Panc1 (cell line): ENCODE measurements at regions of chr1 and their contacts with region 1.

Region 1: DNA sequence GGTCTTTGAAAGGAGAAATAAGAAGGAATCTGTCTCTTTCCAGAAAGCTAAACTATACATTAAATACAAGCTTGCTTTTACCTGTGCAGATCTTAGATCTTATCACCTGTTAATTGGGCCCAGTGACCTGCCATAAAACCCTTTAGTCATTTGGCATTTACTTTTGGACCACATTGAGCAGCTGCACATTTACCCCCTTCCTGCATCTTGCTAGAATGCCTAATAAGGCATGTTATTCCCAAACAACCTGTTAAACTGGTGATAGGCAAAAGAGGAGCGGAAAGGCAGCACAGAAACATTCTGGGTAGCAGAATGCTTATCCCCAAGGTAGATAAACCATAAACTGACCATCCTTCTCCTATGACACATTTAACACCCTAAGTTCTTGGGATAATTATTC is 40.0 kb upstream of the L1TD1 start:
- DNase-seq: no peak
- ATAC-seq: no peak
- H3K4me3 ChIP-seq: no peak overlapping the region
- H3K27ac ChIP-seq: no peak overlapping the region
- H3K4me1 ChIP-seq: no peaks in the 10 kb centered on the region
- H3K27me3 ChIP-seq: no peaks in the 10 kb centered on the region
- CTCF ChIP-seq: no peak

Region 2: DNA sequence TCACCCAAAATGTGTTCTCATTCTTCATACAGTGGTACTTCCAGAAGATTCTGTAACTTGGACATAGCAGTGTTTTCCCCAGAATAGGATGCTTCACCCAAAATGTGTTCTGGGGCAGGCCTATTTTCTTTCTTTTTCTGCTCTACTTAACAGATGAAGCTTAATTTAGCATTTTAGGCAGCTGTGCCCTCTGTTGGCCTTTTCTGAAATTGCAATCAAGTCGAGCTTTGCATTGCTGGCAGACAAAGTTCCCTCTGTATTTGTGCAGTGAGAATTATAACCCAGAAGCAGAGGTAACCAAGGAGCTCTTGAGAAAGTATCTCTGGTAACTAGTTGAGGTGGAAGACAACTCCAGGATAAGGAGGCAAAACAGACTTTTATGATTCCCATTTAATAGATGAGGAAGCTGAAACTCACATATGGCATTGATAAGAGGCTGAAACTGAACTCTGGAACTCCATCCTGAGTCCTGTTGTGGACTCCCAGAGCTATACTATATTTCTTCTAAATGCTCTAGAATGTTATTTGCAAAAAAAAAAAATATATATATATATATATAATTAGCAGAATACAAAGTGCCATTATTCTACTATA is 10.4 kb before region 1 on chr1:
- CTCF ChIA-PET with region 1: interaction called, 10 read pairs
- POLR2A ChIA-PET with region 1: no interaction called
- in situ Hi-C with region 1: no loop called
- intact Hi-C with region 1: no loop called
- DNase-seq: peak; percentile 51
- ATAC-seq: peak; percentile 78; the same call in 1 of the 2 replicates
- H3K4me3 ChIP-seq: no peak overlapping the region
- H3K27ac ChIP-seq: no peak overlapping the region
- H3K4me1 ChIP-seq: no peaks in the 10 kb centered on the region
- H3K27me3 ChIP-seq: no peaks in the 10 kb centered on the region
- CTCF ChIP-seq: peak; percentile 84